Heart right ventricle (tissue), 16 donors: ENCODE measurements at regions of chr5 and their contacts with region 1.

Region 1: DNA sequence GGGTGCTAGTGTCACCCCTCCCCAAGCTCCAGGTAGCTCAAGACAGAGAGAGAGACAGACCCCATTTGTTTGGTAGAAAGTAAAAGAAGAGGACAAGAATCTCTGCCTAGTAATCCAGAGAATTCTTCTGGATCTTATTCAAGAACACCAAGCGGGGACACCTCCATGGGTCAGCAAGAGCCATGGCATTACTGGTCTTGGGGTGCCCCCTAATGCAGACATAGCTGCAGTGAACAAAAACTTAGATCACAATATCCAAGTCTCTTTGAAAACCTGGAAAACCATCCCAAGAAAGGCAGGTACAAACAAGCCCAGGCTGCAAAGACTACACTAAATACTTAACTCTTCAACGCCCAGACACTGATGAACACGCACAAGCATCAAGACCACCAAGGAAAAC is 29.9 kb upstream of the PDE4D start:
- DNase-seq: no peak
- ATAC-seq: no peak
- H3K4me3 ChIP-seq: no peak overlapping the region
- H3K27ac ChIP-seq: no peak overlapping the region
- H3K4me1 ChIP-seq: no peaks in the 10 kb centered on the region
- H3K27me3 ChIP-seq: peaks cover 0 to 4% (median 0%) of the 10 kb centered on the region in 7 donors
- CTCF ChIP-seq: peak in 4 of 9 donors; percentile 18 to 35 (median 26)

Region 2: DNA sequence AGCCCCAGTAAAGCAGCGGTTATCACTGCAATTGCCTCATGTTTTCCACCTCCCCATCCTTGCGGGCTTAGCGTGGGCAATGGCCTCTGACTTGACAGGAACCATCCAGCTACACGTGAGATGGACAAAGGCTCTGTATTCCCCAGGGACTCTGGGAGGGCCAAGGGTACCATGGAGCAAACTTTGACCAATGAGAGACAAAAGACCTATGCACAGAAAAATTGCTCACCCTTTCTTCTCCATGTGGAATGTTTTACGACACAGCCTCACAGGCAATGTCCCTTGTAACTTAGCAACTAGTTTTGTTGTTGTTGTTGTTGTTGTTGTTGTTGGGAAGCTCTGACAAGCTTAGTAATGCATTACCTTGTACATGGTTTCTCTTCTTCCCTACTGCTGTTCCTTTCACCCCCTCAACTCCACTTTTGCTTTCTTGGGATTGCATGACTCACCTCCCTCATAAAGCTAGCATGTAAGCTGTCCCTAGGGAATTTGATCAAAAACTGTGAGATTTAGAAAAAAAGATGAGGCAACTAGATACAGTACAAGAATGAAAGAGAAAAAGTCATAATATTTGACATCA is 789.7 kb before region 1 on chr5:
- intact Hi-C with region 1: no loop called
- DNase-seq: no peak
- ATAC-seq: peak in 3 of 8 donors; percentile 11 to 49 (median 31)
- H3K4me3 ChIP-seq: no peak overlapping the region
- H3K27ac ChIP-seq: no peak overlapping the region
- H3K4me1 ChIP-seq: peaks cover 0 to 14% (median 1%) of the 10 kb centered on the region in 9 donors
- H3K27me3 ChIP-seq: no peaks in the 10 kb centered on the region
- CTCF ChIP-seq: no peak

Region 3: DNA sequence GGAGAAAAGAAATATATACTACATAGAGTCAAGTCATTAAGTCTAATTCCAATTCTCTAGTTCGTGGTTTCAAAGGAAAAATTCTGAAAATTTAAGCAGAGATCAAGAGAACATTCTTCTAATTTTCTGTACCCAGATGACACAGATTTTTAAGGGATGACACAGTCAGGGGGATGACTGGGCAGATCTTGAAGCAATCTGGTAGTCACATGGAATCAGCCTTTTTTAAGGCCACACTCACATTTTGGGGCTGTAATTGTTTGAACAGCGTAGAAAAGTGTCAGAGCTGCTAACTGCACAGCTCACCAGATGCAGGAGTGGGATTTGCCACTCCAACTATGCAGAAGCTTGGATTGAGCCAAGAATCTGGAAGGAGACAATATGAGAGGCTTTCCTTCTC is 50.4 kb before region 1 on chr5:
- intact Hi-C with region 1: loop called in 1 of 10 experiments (anchors 1 kb)
- DNase-seq: no peak
- ATAC-seq: no peak
- H3K4me3 ChIP-seq: no peak overlapping the region
- H3K27ac ChIP-seq: no peak overlapping the region
- H3K4me1 ChIP-seq: no peaks in the 10 kb centered on the region
- H3K27me3 ChIP-seq: no peaks in the 10 kb centered on the region
- CTCF ChIP-seq: no peak